HCT116 (cell line): ENCODE measurements at regions of chr7 and their contacts with region 1.

Region 1: DNA sequence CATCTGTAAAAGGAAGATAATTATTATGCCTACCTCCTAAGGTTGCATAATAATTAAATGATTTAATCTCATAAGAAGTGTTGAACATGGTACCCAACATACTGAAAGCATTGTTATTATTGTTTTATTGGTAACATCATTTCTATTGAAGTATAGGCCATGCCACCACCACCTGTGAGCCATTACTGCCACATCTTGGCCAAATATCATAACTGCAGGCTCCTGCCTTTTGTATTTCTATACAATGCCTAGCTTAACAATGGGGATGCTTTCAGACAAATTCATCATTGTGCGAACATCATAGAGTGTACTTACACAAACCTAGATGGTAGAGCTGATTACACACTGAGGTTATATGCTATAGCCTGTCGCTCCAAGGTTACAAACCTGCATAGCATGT is 61.1 kb upstream of the NPSR1 start:
- DNase-seq: peak; percentile 13
- ATAC-seq: peak; percentile 81
- H3K4me3 ChIP-seq: no peak overlapping the region
- H3K27ac ChIP-seq: no peak overlapping the region
- H3K4me1 ChIP-seq: no peaks in the 10 kb centered on the region
- H3K27me3 ChIP-seq: peaks cover 7% of the 10 kb centered on the region; the same call in 1 of the 2 replicates
- CTCF ChIP-seq: peak; percentile 58 to 79 (median 61); a peak in 5 of 6 replicates
- POLR2A ChIP-seq: no peak
- RAD21 ChIP-seq: peak; percentile 84

Region 2: DNA sequence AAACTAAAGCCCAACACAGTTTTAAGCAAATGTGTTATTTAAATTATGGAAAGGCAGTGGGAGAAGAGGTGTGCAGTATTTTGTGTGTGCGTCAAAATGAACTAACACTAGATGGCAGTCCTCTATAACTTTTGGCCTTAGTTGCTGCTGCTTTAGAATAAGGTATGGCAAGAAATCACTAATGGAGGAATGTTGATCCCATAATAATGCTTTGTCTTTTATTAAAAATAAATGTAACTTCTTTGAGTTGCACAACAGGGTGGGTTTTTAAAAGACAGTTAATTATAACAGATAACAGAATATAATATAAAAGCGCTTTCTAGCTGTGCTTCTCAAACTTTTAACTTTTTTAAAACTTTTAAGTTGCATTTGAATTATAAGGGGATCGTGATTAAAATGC is 1411.1 kb before region 1 on chr7:
- CTCF ChIA-PET with region 1: no interaction called
- POLR2A ChIA-PET with region 1: no interaction called
- RAD21 ChIA-PET with region 1: no interaction called
- intact Hi-C with region 1: loop called (anchors 10 kb)
- DNase-seq: peak; percentile 34
- ATAC-seq: peak; percentile 91
- H3K4me3 ChIP-seq: no peak overlapping the region
- H3K27ac ChIP-seq: no peak overlapping the region
- H3K4me1 ChIP-seq: no peaks in the 10 kb centered on the region
- H3K27me3 ChIP-seq: no peaks in the 10 kb centered on the region
- CTCF ChIP-seq: peak; percentile 49 to 81 (median 65); a peak in 5 of 6 replicates
- POLR2A ChIP-seq: no peak
- RAD21 ChIP-seq: peak; percentile 88

Region 3: DNA sequence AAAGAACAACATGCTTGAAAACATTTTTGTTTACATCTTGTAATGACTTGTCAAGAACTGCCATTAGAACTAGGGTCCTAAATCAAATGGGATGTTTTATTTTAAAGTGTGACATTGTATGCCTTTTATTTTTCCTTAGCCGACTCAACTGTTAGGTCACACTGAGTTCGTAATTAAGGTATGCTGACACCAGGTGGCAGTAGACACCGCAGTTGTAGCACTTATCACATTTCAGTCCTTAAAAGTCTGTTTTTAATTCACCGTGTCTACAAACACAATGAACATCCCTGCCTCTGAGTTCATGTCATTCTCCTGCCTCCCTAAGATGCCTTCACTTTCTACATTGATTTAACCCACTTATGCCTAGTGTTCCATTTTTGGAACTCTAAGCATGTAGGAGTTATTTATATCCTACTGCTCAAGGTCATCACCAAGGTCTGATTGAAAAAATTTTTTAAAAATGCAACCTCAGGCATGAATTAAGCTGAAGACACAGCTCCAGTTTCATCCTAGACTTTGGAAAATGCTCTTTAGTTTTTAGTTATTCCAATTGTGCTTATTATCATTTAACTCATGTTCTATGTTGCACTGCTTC is 505.5 kb before region 1 on chr7:
- CTCF ChIA-PET with region 1: interaction called, 12 read pairs
- POLR2A ChIA-PET with region 1: no interaction called
- RAD21 ChIA-PET with region 1: no interaction called
- intact Hi-C with region 1: loop called (anchors 1 kb)
- DNase-seq: peak; percentile 43
- ATAC-seq: peak; percentile 66
- H3K4me3 ChIP-seq: no peak overlapping the region
- H3K27ac ChIP-seq: no peak overlapping the region
- H3K4me1 ChIP-seq: no peaks in the 10 kb centered on the region
- H3K27me3 ChIP-seq: no peaks in the 10 kb centered on the region
- CTCF ChIP-seq: peak; percentile 56 to 80 (median 64); a peak in 5 of 6 replicates
- POLR2A ChIP-seq: no peak
- RAD21 ChIP-seq: peak; percentile 82

Region 4: GRCh38 chr7:34133983-34134782 is 462.7 kb before region 1 on chr7:
- CTCF ChIA-PET with region 1: interaction called, 19 read pairs
- POLR2A ChIA-PET with region 1: interaction called, 3 read pairs
- RAD21 ChIA-PET with region 1: no interaction called
- intact Hi-C with region 1: loop called (anchors 1 kb)
- DNase-seq: peak; percentile 36
- ATAC-seq: peak; percentile 94
- H3K4me3 ChIP-seq: no peak overlapping the region
- H3K27ac ChIP-seq: no peak overlapping the region
- H3K4me1 ChIP-seq: no peaks in the 10 kb centered on the region
- H3K27me3 ChIP-seq: no peaks in the 10 kb centered on the region
- CTCF ChIP-seq: peak; percentile 61 to 90 (median 86)
- POLR2A ChIP-seq: no peak
- RAD21 ChIP-seq: peak; percentile 88

Region 5: GRCh38 chr7:34321000-34321581 is 275.8 kb before region 1 on chr7:
- CTCF ChIA-PET with region 1: interaction called, 53 read pairs
- POLR2A ChIA-PET with region 1: interaction called, 4 read pairs
- RAD21 ChIA-PET with region 1: interaction called, 6 to 13 read pairs
- intact Hi-C with region 1: loop called (anchors 1 kb)
- DNase-seq: peak; percentile 54
- ATAC-seq: peak; percentile 98
- H3K4me3 ChIP-seq: no peak overlapping the region
- H3K27ac ChIP-seq: no peak overlapping the region
- H3K4me1 ChIP-seq: 0 out of 4 replicates have a peak, but pooled peaks cover 0 to 3% of the 10 kb centered on the region in 2 experiments
- H3K27me3 ChIP-seq: no peaks in the 10 kb centered on the region
- CTCF ChIP-seq: peak; percentile 75 to 91 (median 90); a peak in 5 of 6 replicates
- POLR2A ChIP-seq: no peak
- RAD21 ChIP-seq: peak; percentile 89

Region 6: GRCh38 chr7:34652809-34653208 is 55.9 kb after region 1 on chr7:
- CTCF ChIA-PET with region 1: no interaction called
- POLR2A ChIA-PET with region 1: no interaction called
- RAD21 ChIA-PET with region 1: no interaction called
- intact Hi-C with region 1: loop called (anchors 10 kb)
- DNase-seq: no peak
- ATAC-seq: no peak
- H3K4me3 ChIP-seq: no peak overlapping the region
- H3K27ac ChIP-seq: no peak overlapping the region
- H3K4me1 ChIP-seq: peaks cover 0 to 3% of the 10 kb centered on the region in 2 experiments; a peak in 1 of 4 replicates
- H3K27me3 ChIP-seq: no peaks in the 10 kb centered on the region
- CTCF ChIP-seq: no peak
- POLR2A ChIP-seq: no peak
- RAD21 ChIP-seq: no peak

Region 7: DNA sequence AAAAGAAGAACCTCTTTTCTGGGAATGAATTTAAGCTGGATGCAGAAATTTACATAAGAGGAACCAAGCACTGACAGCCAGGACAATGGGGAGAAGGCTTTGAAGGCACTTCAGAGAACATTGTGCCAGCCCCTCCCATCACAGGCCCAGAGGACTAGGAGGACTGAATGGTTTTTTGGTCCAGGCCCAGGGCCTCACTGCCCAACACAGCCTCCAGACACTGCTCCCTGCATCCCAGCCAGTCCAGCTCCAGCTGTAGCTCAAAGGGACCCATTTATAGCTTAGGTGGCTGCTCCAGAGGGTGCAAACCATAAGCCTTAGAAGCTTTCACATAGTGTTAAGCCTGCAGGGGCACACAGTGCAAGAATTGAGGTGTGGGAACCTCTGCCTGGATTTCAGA is 298.3 kb after region 1 on chr7:
- CTCF ChIA-PET with region 1: no interaction called
- POLR2A ChIA-PET with region 1: no interaction called
- RAD21 ChIA-PET with region 1: no interaction called
- intact Hi-C with region 1: no loop called
- DNase-seq: no peak
- ATAC-seq: no peak
- H3K4me3 ChIP-seq: no peak overlapping the region
- H3K27ac ChIP-seq: no peak overlapping the region
- H3K4me1 ChIP-seq: peaks cover 8 to 17% of the 10 kb centered on the region in 2 experiments; a peak in 3 of 4 replicates
- H3K27me3 ChIP-seq: no peaks in the 10 kb centered on the region
- CTCF ChIP-seq: no peak
- POLR2A ChIP-seq: no peak
- RAD21 ChIP-seq: no peak